ENCODE measurements at regions of chr3 and their contacts with region 1.

Region 1: GRCh38 chr3:52407779-52408178 is 37.1 kb downstream of the SEMA3G start:
- DNase-seq: no peak
- H3K4me3 Mint-ChIP-seq: no peak overlapping the region
- H3K27ac Mint-ChIP-seq: no peak overlapping the region
- H3K4me1 Mint-ChIP-seq: peaks cover 23% of the 10 kb centered on the region
- H3K27me3 Mint-ChIP-seq: no peaks in the 10 kb centered on the region
- CTCF ChIP-seq: no peak

Region 2: GRCh38 chr3:52162250-52162872 is 245.4 kb before region 1 on chr3:
- CTCF ChIA-PET with region 1: no interaction called
- POLR2A ChIA-PET with region 1: no interaction called
- intact Hi-C with region 1: no loop called
- DNase-seq: no peak
- H3K4me3 Mint-ChIP-seq: no peak overlapping the region
- H3K27ac Mint-ChIP-seq: no peak overlapping the region
- H3K4me1 Mint-ChIP-seq: no peaks in the 10 kb centered on the region
- H3K27me3 Mint-ChIP-seq: no peaks in the 10 kb centered on the region
- CTCF ChIP-seq: no peak

Region 3: DNA sequence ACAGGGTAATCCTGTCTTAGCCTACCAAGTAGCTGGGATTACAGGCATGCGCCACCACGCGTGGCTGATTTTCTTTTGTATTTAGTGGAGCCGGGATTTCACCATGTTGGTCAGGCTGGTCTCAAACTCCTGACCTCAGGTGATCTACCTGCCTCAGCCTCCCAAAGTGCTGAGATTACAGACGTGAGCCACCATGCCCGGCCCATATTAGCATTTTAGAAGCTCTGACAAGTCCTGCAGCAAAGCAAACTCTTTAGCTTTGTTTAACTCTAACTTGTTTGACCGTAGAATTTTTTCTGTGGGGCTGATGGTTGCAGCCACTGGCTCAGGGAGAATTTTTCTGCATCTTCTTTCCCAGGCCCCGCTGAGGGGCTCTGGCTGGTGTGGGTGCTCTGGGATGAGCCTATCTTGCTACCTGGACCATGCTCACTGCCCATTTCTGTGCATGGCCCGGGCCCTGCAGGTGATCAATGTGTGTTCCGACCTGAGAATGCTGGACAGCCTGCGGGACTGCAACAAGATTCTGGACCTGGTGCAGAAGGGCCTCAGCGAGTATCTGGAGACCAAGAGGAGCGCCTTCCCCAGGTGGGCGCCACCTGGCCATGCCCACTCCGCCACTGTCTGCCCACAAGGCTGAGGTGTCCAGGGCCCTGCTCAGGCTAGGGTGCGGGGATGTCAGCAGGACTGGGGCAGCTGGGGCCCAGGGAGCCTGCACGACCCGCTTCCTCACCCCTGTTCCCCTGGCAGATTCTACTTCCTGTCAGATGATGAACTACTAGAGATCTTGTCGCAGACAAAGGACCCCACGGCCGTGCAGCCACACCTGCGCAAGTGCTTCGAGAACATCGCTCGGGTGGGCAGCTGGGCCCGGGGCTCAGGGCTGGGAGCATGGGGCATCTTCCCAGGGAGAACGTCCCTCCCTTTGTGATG is 50.4 kb before region 1 on chr3:
- CTCF ChIA-PET with region 1: no interaction called
- POLR2A ChIA-PET with region 1: no interaction called
- intact Hi-C with region 1: no loop called
- DNase-seq: no peak
- H3K4me3 Mint-ChIP-seq: no peak overlapping the region
- H3K27ac Mint-ChIP-seq: no peak overlapping the region
- H3K4me1 Mint-ChIP-seq: no peaks in the 10 kb centered on the region
- H3K27me3 Mint-ChIP-seq: no peaks in the 10 kb centered on the region
- CTCF ChIP-seq: no peak

Region 4: GRCh38 chr3:52428151-52429005 is 20.6 kb after region 1 on chr3:
- CTCF ChIA-PET with region 1: interaction called, 30 read pairs
- POLR2A ChIA-PET with region 1: interaction called, 5 read pairs
- intact Hi-C with region 1: no loop called
- DNase-seq: peak; percentile 83
- H3K4me3 Mint-ChIP-seq: no peak overlapping the region
- H3K27ac Mint-ChIP-seq: no peak overlapping the region
- H3K4me1 Mint-ChIP-seq: no peaks in the 10 kb centered on the region
- H3K27me3 Mint-ChIP-seq: peaks cover 11% of the 10 kb centered on the region
- CTCF ChIP-seq: peak; percentile 63

Region 5: DNA sequence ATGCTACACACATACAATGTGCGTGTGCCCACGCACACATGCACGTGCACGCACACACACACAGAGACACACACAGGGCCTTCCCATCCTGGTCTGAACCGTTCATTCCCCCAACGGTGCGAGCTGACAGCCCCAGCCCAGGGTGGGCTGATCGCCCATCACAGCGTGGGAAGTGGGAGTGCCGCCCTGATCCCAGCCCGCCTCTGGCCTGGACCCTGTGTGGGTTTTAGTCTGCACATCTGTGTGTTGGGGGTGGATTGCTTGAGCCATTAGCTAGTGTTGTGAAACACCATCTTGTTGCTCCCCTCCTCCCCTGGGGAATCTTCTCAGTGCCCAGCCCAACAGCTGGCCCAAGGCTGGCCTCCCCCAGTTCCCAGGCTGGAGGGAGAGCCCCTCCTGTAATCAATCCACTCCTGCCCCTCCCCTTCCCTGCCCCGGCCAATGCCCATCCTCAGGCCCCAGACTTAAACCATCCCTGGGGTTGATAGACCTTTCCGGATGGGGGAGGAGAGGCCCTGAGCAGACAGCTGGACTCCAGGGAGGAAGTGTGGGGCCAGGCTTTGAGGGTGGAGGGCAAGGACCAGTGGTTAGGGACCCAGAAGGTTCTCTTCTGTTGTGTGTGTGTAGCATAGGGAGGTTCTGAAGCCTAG is 28.8 kb after region 1 on chr3:
- CTCF ChIA-PET with region 1: interaction called, 10 read pairs
- POLR2A ChIA-PET with region 1: no interaction called
- intact Hi-C with region 1: no loop called
- DNase-seq: no peak
- H3K4me3 Mint-ChIP-seq: no peak overlapping the region
- H3K27ac Mint-ChIP-seq: no peak overlapping the region
- H3K4me1 Mint-ChIP-seq: peaks cover 8% of the 10 kb centered on the region
- H3K27me3 Mint-ChIP-seq: no peaks in the 10 kb centered on the region
- CTCF ChIP-seq: no peak

Region 6: DNA sequence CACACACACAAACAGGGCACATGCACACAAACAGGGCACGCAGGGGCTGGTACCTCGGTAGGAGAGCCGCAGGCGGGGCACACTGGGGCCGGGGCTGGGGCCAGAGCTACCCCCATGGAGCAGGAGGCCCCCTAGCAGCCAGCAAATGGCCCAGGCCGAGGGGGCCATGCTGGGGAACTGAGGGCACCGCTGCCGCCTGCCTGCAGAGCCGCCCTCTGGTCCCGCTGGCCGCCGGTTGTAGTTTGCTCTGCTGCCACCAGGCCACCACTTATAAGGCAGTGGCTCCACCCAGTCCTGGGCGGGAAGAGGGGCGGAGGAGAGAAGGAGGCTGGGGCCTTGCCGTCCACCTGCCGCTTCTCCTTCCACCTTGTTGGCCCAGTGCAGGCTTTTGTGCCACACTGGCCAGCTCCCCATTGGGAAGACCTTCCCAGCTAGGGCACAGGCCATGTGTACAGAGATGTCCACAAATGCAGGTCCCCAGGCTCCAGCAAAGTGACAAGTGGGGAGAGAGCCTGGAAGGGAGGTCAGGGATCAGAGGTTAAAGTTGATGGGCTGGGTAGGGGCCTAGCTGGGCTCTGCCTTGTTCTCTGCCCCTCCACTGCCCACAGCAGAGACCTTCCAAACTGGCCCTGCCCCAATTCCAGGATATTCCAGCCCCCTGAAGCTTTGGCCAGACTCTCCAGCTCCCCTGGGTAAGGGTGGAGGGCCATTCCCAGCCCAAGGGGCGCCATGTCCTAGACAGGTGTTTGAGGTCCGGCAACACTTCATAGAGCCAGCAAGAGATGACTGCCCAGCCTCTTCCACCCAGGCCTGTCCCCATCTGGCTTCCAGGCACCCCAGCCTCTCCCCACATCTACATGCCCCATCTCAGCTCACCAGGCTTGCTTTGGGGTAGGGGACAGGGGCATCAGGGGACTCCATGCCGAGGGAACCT is 37.3 kb after region 1 on chr3 and contains the start of gene SEMA3G:
- CTCF ChIA-PET with region 1: interaction called, 29 read pairs
- POLR2A ChIA-PET with region 1: interaction called, 6 read pairs
- intact Hi-C with region 1: loop called (anchors 1 kb)
- DNase-seq: peak; percentile 68
- H3K4me3 Mint-ChIP-seq: no peak within 1 kb of the TSS
- H3K27ac Mint-ChIP-seq: no peak within 1 kb of the TSS
- H3K4me1 Mint-ChIP-seq: no peaks in the 10 kb centered on the region
- H3K27me3 Mint-ChIP-seq: no peaks in the 10 kb centered on the region
- CTCF ChIP-seq: peak; percentile 23
- total RNA-seq, gene SEMA3G: 0.12 TPM in 1 of 2 replicates, not detected in the other

Region 7: GRCh38 chr3:52455283-52456168 is 47.7 kb after region 1 on chr3 and contains the start of gene NISCH:
- CTCF ChIA-PET with region 1: interaction called, 11 read pairs
- POLR2A ChIA-PET with region 1: interaction called, 5 read pairs
- intact Hi-C with region 1: no loop called
- DNase-seq: peak; percentile 83
- H3K4me3 Mint-ChIP-seq: peak within 1 kb of the TSS; percentile 92
- H3K27ac Mint-ChIP-seq: peak within 1 kb of the TSS; percentile 95
- H3K4me1 Mint-ChIP-seq: peaks cover 26% of the 10 kb centered on the region
- H3K27me3 Mint-ChIP-seq: no peaks in the 10 kb centered on the region
- CTCF ChIP-seq: no peak
- total RNA-seq, gene NISCH: 60.5 and 69.7 TPM in 2 replicates